ENCODE measurements at regions of chr21 and their contacts with region 1.

Region 1: DNA sequence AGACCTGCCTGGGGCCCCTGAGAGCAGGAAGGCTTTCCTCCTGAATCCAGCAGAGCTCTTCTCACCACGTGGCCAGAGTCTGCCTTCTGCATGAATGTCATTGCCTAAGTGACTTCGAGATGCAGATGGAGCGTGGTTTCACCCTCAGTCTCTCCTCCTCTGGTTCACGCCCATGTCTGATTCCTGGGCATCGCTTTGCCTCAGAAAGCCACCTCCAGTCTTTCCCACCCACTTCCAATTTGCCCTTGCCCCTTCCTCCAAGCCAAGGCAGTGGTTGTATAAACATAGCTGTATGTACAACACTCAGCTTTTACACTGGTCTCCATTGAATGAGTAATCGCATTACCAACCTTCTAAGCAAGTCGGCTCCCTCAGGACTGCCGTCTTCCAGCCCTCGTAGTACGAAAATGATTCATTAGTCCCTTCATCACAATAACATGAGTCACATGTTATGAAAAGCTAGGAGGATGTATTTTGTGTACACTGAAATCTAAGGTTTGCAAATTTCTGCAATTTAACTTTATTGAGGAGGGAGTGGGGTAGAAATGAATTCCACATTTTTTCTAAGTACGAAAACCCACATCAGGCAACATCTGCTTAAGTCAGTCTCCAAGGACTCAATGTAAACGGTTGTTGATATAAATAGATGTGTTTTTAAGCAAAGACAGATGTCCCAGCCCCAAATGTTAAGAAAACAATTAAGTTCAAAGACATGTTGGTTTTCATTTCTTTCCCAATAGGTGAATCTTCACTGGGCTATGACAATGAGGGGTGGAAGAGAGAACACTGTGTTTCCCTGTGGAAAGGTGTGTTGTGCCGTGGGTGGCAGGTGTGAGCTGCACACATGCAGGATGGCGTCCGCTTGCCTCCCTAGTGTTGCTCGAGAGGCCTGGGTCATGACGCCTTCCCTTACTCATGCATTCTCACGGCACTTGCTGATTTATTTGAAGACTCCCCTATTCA is 32.3 kb upstream of the ETS2 start:
- DNase-seq: peak; percentile 92
- H3K4me3 ChIP-seq: no peak overlapping the region
- H3K27ac ChIP-seq: peak overlapping the region; percentile 61
- H3K4me1 ChIP-seq: peaks cover 17% of the 10 kb centered on the region
- H3K27me3 ChIP-seq: no peaks in the 10 kb centered on the region
- CTCF ChIP-seq: no peak

Region 2: DNA sequence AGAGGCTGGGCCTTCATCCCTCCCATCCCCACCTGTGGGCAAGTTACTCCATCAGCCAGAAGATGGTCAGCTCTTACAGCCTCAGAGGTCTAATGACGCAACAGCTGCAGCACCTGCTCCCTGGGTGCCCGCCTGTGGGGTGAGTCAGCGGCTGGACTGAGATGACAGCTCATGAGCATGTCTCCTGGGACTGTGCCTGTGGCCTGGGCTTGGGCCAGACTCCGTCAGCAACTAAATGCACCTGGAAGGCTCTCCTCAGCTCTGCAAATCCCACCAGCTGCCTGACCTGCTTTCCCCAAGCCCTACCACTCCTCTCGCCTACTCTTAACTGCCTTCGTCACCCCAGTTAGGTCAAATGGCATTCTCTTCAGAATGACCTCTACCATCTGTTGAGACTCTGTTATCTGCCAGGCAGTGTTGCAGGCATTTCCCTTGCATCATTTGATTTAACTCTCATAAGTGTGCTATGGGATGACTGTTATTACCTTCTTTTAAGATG is 80.1 kb after region 1 on chr21:
- CTCF ChIA-PET with region 1: no interaction called
- dilution Hi-C with region 1: loop called (anchors 5 kb)
- in situ Hi-C with region 1: no loop called
- intact Hi-C with region 1: no loop called
- DNase-seq: peak; percentile 98
- H3K4me3 ChIP-seq: no peak overlapping the region
- H3K27ac ChIP-seq: peak overlapping the region; percentile 45
- H3K4me1 ChIP-seq: peaks cover 28% of the 10 kb centered on the region
- H3K27me3 ChIP-seq: no peaks in the 10 kb centered on the region
- CTCF ChIP-seq: no peak

Region 3: DNA sequence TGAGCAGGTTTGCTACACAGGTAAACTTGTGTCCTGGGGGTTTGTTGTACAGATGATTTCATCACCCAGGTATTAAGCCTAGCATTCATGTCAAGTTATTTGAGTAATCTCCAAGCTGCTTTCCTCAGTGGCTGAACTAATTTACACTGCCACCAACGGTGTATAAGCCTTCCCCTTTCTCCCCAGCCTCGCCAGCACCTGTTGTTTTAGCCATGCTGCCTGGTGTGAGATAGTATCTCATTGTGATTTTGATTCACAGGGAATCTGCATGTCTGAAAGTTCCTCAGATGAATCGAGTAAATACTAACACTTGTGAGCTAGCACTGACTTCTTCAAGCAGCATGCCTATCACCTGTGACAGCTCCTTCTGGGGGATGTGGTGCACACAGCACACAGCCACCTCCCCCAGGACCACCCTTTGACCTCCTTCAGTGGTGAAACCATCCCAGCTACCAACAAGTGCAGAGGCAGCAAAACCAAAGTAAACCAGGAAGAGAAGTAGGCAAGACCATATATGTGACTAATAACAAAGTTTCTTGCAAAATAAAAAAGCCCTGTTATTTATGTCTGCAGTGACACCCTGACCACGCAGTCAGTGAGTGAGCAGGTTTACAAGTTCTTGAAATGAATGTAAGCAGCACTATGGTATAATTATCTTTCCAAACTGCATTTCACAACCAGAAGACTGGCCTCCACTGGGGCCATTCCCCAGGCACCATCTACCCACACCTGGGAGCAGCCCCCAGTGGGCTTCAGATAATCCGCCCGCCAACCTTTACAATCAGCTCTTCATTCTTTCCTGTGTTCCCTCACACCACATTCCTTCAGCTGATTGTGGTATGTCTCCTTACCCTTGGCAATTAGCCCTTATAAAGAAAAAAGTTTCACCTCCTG is 206.1 kb after region 1 on chr21:
- CTCF ChIA-PET with region 1: no interaction called
- dilution Hi-C with region 1: no loop called
- in situ Hi-C with region 1: no loop called
- intact Hi-C with region 1: no loop called
- DNase-seq: peak; percentile 63
- H3K4me3 ChIP-seq: no peak overlapping the region
- H3K27ac ChIP-seq: no peak overlapping the region
- H3K4me1 ChIP-seq: peaks cover 12% of the 10 kb centered on the region
- H3K27me3 ChIP-seq: no peaks in the 10 kb centered on the region
- CTCF ChIP-seq: no peak